Activated CD8-positive, alpha-beta T cell treated with anti-CD3 and anti-CD28 coated beads, Interleukin-2, amount 10 ng/mL, durations not matched to agents 7 days and 5 days (primary cell): ENCODE measurements at regions of chr9 and their contacts with region 1.

Region 1: DNA sequence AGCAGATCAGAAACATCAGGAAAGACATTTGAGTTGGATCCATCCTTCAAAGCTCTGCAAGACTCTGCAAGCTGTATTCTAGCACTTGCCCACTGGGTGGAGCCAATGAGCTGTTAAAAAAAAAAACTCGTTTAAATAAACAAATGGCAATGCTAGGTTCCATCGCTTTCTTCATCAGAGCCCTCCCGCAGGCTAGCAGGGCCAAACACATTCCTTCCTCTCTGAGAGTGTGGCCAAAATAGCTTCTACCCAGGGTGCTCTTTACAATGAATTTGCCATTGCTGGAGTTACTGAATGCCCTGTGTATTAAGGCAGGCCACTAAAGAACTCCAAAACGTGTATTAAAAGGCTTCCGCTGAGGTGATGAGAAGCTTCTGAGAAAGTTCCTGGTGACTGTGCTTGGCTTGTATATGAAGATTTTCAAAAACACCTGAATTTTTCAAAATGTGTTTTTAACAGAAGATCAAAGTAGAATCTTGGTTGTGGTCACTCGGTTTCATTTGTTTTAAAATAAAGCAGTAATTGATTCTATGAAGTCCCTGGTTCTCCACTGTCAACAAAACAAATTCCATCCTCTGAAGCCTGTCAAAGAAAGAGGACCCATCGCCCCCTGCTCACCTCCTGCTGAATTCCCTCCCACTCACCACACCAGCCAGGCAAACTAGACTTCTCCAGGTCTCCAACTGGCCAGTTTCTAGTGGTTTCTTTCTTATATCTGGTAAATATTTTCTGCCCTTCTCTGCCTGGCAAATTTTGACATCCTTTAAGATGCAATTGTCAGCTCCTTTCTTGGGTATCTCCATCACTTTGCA is 36.5 kb upstream of the EQTN start:
- DNase-seq: peak; percentile 64
- ATAC-seq: peak; percentile 68
- H3K4me3 Mint-ChIP-seq: no peak overlapping the region
- H3K27ac Mint-ChIP-seq: no peak overlapping the region
- H3K4me1 Mint-ChIP-seq: peaks cover 16% of the 10 kb centered on the region
- H3K27me3 Mint-ChIP-seq: peaks cover 4% of the 10 kb centered on the region

Region 2: DNA sequence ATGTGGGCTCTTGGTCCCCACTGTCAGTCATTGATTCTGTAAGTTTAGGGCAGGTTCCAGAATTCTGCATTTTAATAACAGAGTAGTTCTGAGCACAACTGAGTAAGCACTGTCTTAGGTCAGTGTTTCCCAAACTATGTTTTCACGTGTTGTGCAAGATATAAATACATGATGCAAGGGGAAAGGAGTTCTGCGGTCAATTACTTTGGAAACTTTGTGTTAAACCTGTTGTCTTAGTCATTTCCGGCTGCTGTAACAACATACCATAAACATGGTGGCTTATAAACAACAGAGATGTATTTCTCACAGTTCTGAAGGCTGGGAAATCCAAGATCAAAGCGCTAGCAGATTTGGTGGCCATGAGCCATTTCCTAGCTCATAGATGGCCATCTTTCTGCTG is 106.3 kb before region 1 on chr9:
- CTCF ChIA-PET with region 1: no interaction called
- POLR2A ChIA-PET with region 1: no interaction called
- DNase-seq: no peak
- ATAC-seq: no peak
- H3K4me3 Mint-ChIP-seq: no peak overlapping the region
- H3K27ac Mint-ChIP-seq: no peak overlapping the region
- H3K4me1 Mint-ChIP-seq: no peaks in the 10 kb centered on the region
- H3K27me3 Mint-ChIP-seq: no peaks in the 10 kb centered on the region

Region 3: GRCh38 chr9:27311184-27311583 is 22.3 kb before region 1 on chr9:
- CTCF ChIA-PET with region 1: no interaction called
- POLR2A ChIA-PET with region 1: no interaction called
- DNase-seq: no peak
- ATAC-seq: no peak
- H3K4me3 Mint-ChIP-seq: no peak overlapping the region
- H3K27ac Mint-ChIP-seq: no peak overlapping the region
- H3K4me1 Mint-ChIP-seq: no peaks in the 10 kb centered on the region
- H3K27me3 Mint-ChIP-seq: peaks cover 5% of the 10 kb centered on the region

Region 4: GRCh38 chr9:27485158-27485557 is 151.7 kb after region 1 on chr9:
- CTCF ChIA-PET with region 1: interaction called, 12 read pairs
- POLR2A ChIA-PET with region 1: no interaction called
- DNase-seq: peak; percentile 50
- ATAC-seq: peak; percentile 85
- H3K4me3 Mint-ChIP-seq: peak overlapping the region; percentile 7
- H3K27ac Mint-ChIP-seq: peak overlapping the region; percentile 76
- H3K4me1 Mint-ChIP-seq: peaks cover 40% of the 10 kb centered on the region
- H3K27me3 Mint-ChIP-seq: peaks cover 3% of the 10 kb centered on the region

Region 5: GRCh38 chr9:27529316-27530278 is 196.2 kb after region 1 on chr9 and contains the start of gene MOB3B:
- CTCF ChIA-PET with region 1: interaction called, 59 read pairs
- POLR2A ChIA-PET with region 1: interaction called, 3 read pairs
- DNase-seq: peak; percentile 81
- ATAC-seq: peak; percentile 90
- H3K4me3 Mint-ChIP-seq: peak within 1 kb of the TSS; percentile 83
- H3K27ac Mint-ChIP-seq: peak within 1 kb of the TSS; percentile 75
- H3K4me1 Mint-ChIP-seq: peaks cover 14% of the 10 kb centered on the region
- H3K27me3 Mint-ChIP-seq: peaks cover 17% of the 10 kb centered on the region
- total RNA-seq, gene MOB3B: 2.5 to 2.8 TPM

Region 6: GRCh38 chr9:27539479-27540441 is 206.3 kb after region 1 on chr9:
- CTCF ChIA-PET with region 1: interaction called, 38 read pairs
- POLR2A ChIA-PET with region 1: no interaction called
- DNase-seq: no peak
- ATAC-seq: no peak
- H3K4me3 Mint-ChIP-seq: no peak overlapping the region
- H3K27ac Mint-ChIP-seq: no peak overlapping the region
- H3K4me1 Mint-ChIP-seq: peaks cover 2% of the 10 kb centered on the region
- H3K27me3 Mint-ChIP-seq: no peaks in the 10 kb centered on the region

Region 7: GRCh38 chr9:27548055-27548741 is 214.8 kb after region 1 on chr9:
- CTCF ChIA-PET with region 1: interaction called, 38 read pairs
- POLR2A ChIA-PET with region 1: no interaction called
- DNase-seq: no peak
- ATAC-seq: no peak
- H3K4me3 Mint-ChIP-seq: no peak overlapping the region
- H3K27ac Mint-ChIP-seq: no peak overlapping the region
- H3K4me1 Mint-ChIP-seq: no peaks in the 10 kb centered on the region
- H3K27me3 Mint-ChIP-seq: no peaks in the 10 kb centered on the region